PC-3 (cell line): ENCODE measurements at regions of chr18 and their contacts with region 1.

Region 1: GRCh38 chr18:11741505-11742145 is 52.6 kb downstream of the GNAL start:
- DNase-seq: peak; percentile 42
- ATAC-seq: peak; percentile 71
- H3K4me3 ChIP-seq: no peak overlapping the region
- H3K27ac ChIP-seq: no peak overlapping the region
- H3K4me1 ChIP-seq: no peaks in the 10 kb centered on the region
- H3K27me3 ChIP-seq: peaks cover 97% of the 10 kb centered on the region
- CTCF ChIP-seq: peak; percentile 75

Region 2: DNA sequence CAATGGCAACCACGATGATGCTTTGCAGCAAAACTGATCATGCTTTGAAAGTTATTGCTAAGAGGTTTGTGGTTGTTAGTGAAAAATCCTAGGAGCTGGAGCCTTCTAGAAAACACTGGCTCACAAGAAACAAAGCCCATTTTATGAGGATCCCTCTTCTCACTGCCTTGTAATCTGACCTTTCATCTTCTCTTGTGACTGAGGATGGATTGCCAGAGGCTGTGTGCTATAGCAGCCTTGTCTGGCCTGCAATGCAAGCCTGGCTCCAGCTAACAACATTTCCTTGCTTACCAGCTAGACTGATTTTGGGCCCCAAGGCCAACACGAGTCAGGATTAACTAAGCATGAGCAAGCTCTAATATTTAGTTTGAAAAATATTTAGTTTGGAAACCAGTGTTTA is 605.4 kb before region 1 on chr18:
- CTCF ChIA-PET with region 1: no interaction called
- POLR2A ChIA-PET with region 1: no interaction called
- intact Hi-C with region 1: no loop called
- DNase-seq: no peak
- ATAC-seq: no peak
- H3K4me3 ChIP-seq: no peak overlapping the region
- H3K27ac ChIP-seq: no peak overlapping the region
- H3K4me1 ChIP-seq: no peaks in the 10 kb centered on the region
- H3K27me3 ChIP-seq: peaks cover 54% of the 10 kb centered on the region
- CTCF ChIP-seq: no peak

Region 3: GRCh38 chr18:11808001-11808855 is 66.6 kb after region 1 on chr18:
- CTCF ChIA-PET with region 1: no interaction called
- POLR2A ChIA-PET with region 1: no interaction called
- intact Hi-C with region 1: loop called (anchors 5 kb)
- DNase-seq: peak; percentile 96
- ATAC-seq: peak; percentile 100
- H3K4me3 ChIP-seq: peak overlapping the region; percentile 36; the same call in 1 of the 2 replicates
- H3K27ac ChIP-seq: peak overlapping the region; percentile 91
- H3K4me1 ChIP-seq: peaks cover 25% of the 10 kb centered on the region
- H3K27me3 ChIP-seq: no peaks in the 10 kb centered on the region
- CTCF ChIP-seq: 0 out of 2 replicates have a peak, but pooled peaks have one; percentile 18